ENCODE measurements at regions of chr21 and their contacts with region 1.

Region 1: GRCh38 chr21:38472412-38473108 is 25.7 kb downstream of the ERG start:
- DNase-seq: no peak
- ATAC-seq: no peak
- H3K4me3 ChIP-seq: no peak overlapping the region
- H3K27ac ChIP-seq: no peak overlapping the region
- H3K4me1 ChIP-seq: peaks cover 9% of the 10 kb centered on the region
- H3K27me3 ChIP-seq: no peaks in the 10 kb centered on the region
- CTCF ChIP-seq: no peak

Region 2: GRCh38 chr21:38241029-38241740 is 231.4 kb before region 1 on chr21:
- CTCF ChIA-PET with region 1: interaction called, 10 read pairs
- POLR2A ChIA-PET with region 1: no interaction called
- intact Hi-C with region 1: no loop called
- DNase-seq: no peak
- ATAC-seq: no peak
- H3K4me3 ChIP-seq: no peak overlapping the region
- H3K27ac ChIP-seq: no peak overlapping the region
- H3K4me1 ChIP-seq: peaks cover 16% of the 10 kb centered on the region
- H3K27me3 ChIP-seq: no peaks in the 10 kb centered on the region
- CTCF ChIP-seq: no peak

Region 3: GRCh38 chr21:38654580-38654979 is 182.0 kb after region 1 on chr21:
- CTCF ChIA-PET with region 1: no interaction called
- POLR2A ChIA-PET with region 1: no interaction called
- intact Hi-C with region 1: no loop called
- DNase-seq: no peak
- ATAC-seq: no peak
- H3K4me3 ChIP-seq: no peak overlapping the region
- H3K27ac ChIP-seq: no peak overlapping the region
- H3K4me1 ChIP-seq: no peaks in the 10 kb centered on the region
- H3K27me3 ChIP-seq: peaks cover 85% of the 10 kb centered on the region
- CTCF ChIP-seq: no peak